ENCODE measurements at regions of chr5 and their contacts with region 1.

Region 1: DNA sequence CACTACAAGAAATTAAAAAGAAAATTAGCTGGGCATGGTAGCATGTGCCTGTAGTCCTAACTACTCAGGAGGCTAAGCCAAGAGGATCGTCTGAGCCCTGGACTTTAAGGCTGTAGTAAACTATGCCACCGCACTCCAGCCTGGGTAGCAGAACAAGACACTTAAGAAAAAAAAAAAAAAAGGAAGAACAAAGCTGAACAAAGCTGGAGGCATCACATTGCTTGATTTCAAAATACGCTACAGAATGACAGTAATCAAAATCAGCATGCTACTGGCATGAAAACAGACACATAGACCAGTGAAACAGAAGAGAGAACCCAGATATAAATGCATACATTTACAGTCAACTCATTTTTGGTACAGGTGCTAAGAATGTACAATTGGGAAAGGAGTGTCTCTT is 14.5 kb upstream of the OTULIN start:
- DNase-seq: no peak
- H3K4me3 ChIP-seq: no peak overlapping the region
- H3K27ac ChIP-seq: no peak overlapping the region
- H3K4me1 ChIP-seq: no peaks in the 10 kb centered on the region
- H3K27me3 ChIP-seq: peaks cover 0 to 2% (median 0%) of the 10 kb centered on the region in 5 experiments

Region 2: DNA sequence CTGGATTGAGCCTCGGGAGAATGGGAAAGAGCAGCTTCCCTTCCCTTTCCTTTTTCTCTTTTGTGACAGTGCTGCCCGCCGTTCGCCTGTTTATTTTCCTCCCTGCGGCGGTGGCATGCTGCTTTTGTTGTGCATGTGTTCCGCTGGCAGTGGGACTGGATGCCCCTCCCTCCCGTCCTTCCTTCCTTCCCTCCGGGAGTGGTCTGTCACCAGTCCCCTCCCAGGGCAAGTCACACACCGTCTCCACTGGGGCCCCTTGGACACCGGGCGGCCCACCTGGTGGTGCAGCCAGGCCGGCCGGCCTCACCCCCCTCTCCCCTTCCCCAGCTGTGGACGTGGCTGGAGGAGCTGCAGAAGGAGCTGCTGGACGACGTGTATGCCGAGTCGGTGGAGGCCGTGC is 292.2 kb before region 1 on chr5:
- CTCF ChIA-PET with region 1: interaction called, 53 read pairs
- POLR2A ChIA-PET with region 1: no interaction called
- DNase-seq: no peak
- H3K4me3 ChIP-seq: no peak overlapping the region
- H3K27ac ChIP-seq: no peak overlapping the region
- H3K4me1 ChIP-seq: peaks cover 0 to 11% (median 4%) of the 10 kb centered on the region in 4 experiments
- H3K27me3 ChIP-seq: no peaks in the 10 kb centered on the region

Region 3: GRCh38 chr5:14628346-14628745 is 21.7 kb before region 1 on chr5:
- CTCF ChIA-PET with region 1: interaction called, 10 read pairs
- POLR2A ChIA-PET with region 1: no interaction called
- DNase-seq: peak; percentile 56 to 83 (median 77)
- H3K4me3 ChIP-seq: no peak overlapping the region
- H3K27ac ChIP-seq: no peak overlapping the region
- H3K4me1 ChIP-seq: no peaks in the 10 kb centered on the region
- H3K27me3 ChIP-seq: no peaks in the 10 kb centered on the region

Region 4: GRCh38 chr5:14693070-14693469 is 43.0 kb after region 1 on chr5:
- CTCF ChIA-PET with region 1: no interaction called
- POLR2A ChIA-PET with region 1: no interaction called
- DNase-seq: no peak
- H3K4me3 ChIP-seq: no peak overlapping the region
- H3K27ac ChIP-seq: no peak overlapping the region
- H3K4me1 ChIP-seq: peaks cover 0 to 7% (median 0%) of the 10 kb centered on the region in 4 experiments
- H3K27me3 ChIP-seq: no peaks in the 10 kb centered on the region